ENCODE measurements at regions of chr21 and their contacts with region 1.

Region 1: DNA sequence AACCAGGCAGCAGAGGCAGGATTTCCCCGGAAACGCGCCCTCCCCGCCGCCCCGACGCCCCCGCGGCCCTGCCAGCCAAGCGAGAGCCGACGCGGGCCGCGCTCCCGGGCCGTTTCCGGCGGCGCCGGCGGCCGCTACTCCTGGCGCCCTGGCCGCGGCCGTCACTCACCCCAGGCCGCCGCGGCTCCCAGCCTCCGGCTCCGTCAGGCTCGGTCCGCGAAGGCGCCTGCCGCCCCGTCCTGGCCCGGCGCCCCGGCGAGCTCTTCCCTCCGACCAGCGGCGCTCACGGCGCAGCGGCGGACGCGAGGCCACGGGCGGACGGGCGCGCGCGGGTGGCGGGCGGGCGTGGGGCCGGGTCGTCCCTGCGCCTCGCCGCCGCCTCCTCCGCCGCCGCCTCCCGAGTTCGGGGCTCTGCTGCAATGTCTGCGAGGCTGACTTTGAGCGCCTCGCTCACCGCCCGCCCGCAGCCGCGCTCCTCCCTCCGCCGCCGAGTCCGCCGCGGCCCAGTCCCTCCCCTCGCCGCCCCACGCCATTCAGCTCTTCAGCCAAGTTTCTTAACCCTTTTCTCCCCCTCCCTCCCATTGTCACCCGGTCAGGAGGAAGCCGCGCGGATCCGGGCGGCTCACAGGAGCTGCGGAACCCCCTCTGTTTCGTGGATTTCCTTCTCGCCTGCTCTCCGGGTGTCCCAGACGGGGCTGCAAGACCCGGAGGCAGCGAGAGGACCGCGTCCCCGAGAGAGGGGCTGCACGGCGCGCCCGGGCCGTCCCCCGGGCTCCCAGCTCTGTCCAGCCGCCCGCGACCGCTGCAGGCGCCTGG is at the start of gene NRIP1:
- DNase-seq: peak; percentile 80 to 88 (median 82)
- ATAC-seq: peak; percentile 91
- H3K4me3 ChIP-seq: peak within 1 kb of the TSS; percentile 73
- H3K4me3 Mint-ChIP-seq: peak within 1 kb of the TSS; percentile 94 to 99 (median 96)
- H3K27ac ChIP-seq: peak within 1 kb of the TSS; percentile 85
- H3K27ac Mint-ChIP-seq: peak within 1 kb of the TSS; percentile 95 to 99 (median 98)
- H3K4me1 ChIP-seq: peaks cover 0 to 20% of the 10 kb centered on the region in 2 donors
- H3K4me1 Mint-ChIP-seq: peaks cover 25 to 53% (median 45%) of the 10 kb centered on the region in 7 donors
- H3K27me3 ChIP-seq: no peaks in the 10 kb centered on the region
- H3K27me3 Mint-ChIP-seq: peaks cover 0 to 33% (median 0%) of the 10 kb centered on the region in 5 donors
- total RNA-seq, gene NRIP1: 13.8 to 42.6 (median 35.8) TPM

Region 2: DNA sequence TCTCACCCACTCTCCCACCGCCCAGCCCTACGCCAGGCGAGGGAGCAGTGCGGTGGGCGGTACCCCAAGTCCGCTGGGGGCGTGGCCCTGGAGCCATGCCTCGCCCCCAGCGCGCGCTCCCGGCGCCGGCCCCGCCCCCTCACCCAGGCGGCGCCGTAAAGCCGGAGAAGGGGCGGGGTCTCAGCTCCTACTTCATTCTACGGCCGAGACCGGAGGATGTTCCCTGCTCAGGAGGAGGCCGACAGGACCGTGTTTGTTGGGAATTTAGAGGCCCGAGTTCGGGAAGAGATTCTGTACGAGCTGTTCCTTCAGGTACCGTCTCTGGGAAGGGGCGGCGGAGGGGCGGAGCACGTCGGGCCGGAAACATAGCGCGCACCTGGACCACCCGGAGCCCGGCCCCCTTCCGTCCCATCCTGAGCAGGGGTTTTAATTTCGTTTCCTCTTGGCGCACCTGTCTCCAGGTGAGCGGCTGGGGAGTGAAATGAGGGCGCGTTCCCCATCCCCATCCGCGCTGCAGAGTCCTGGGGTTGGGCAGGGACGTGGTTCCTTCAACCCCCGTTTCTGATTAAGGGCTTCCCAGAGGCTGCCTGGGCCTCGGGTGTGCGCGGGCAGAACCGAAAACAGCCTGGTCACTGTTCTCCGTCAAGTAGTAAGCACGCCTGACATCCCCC is 848.7 kb before region 1 on chr21 and contains the start of gene RBM11:
- CTCF ChIA-PET with region 1: no interaction called
- POLR2A ChIA-PET with region 1: no interaction called
- intact Hi-C with region 1: loop called in 1 of 2 experiments (anchors 5 kb)
- DNase-seq: peak; percentile 69 to 88 (median 82)
- ATAC-seq: peak; percentile 99
- H3K4me3 ChIP-seq: peak within 1 kb of the TSS; percentile 80
- H3K4me3 Mint-ChIP-seq: peak within 1 kb of the TSS; percentile 86 to 93 (median 90)
- H3K27ac ChIP-seq: peak within 1 kb of the TSS; percentile 77
- H3K27ac Mint-ChIP-seq: peak within 1 kb of the TSS in 8 of 9 donors; percentile 61 to 88 (median 82)
- H3K4me1 ChIP-seq: peaks cover 0 to 8% of the 10 kb centered on the region in 2 donors
- H3K4me1 Mint-ChIP-seq: peaks cover 0 to 10% (median 8%) of the 10 kb centered on the region in 7 donors
- H3K27me3 ChIP-seq: no peaks in the 10 kb centered on the region
- H3K27me3 Mint-ChIP-seq: peaks cover 4 to 26% (median 8%) of the 10 kb centered on the region in 5 donors
- total RNA-seq, gene RBM11: 0.46 to 19.3 (median 4.9) TPM

Region 3: DNA sequence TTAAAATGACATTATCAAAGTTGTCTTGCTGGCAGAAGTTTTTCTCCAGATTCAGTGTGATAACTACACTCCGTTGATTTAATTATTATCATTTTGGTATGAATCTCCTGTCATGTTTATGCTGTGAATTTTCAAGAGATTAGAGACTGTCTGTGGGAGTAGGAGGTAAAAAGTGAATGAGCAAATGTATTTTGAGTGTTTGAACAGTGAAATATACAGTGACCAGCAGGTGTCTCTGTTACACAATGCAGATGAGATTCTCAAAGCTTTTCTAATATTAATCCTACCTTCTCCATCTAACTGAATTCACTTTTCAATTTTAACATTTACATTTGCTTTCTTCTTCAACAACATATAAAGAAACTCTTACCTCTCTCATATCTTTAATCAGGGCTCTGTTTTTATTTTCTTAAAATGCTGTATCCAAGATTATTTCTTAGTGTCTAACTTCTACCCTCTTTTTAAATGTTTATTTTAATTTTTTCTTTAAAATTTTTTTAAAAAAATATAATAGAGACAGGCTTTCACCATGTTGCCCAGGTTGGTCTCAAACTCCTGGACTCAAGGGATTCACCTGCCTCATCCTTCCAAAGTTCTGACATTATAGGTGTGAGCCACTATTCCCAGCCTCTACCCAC is 661.0 kb before region 1 on chr21:
- CTCF ChIA-PET with region 1: no interaction called
- POLR2A ChIA-PET with region 1: no interaction called
- intact Hi-C with region 1: loop called (anchors 5 kb)
- DNase-seq: peak in 5 of 9 donors; percentile 19 to 55 (median 39)
- ATAC-seq: peak; percentile 79
- H3K4me3 ChIP-seq: no peak overlapping the region
- H3K4me3 Mint-ChIP-seq: no peak overlapping the region
- H3K27ac ChIP-seq: no peak overlapping the region
- H3K27ac Mint-ChIP-seq: no peak overlapping the region
- H3K4me1 ChIP-seq: no peaks in the 10 kb centered on the region
- H3K4me1 Mint-ChIP-seq: no peaks in the 10 kb centered on the region
- H3K27me3 ChIP-seq: no peaks in the 10 kb centered on the region
- H3K27me3 Mint-ChIP-seq: peaks cover 0 to 1% (median 0%) of the 10 kb centered on the region in 5 donors

Region 4: GRCh38 chr21:14737922-14738321 is 326.9 kb before region 1 on chr21:
- CTCF ChIA-PET with region 1: no interaction called
- POLR2A ChIA-PET with region 1: no interaction called
- intact Hi-C with region 1: loop called in 1 of 2 experiments (anchors 10 kb)
- DNase-seq: peak in 7 of 9 donors; percentile 54 to 80 (median 72)
- ATAC-seq: peak; percentile 94
- H3K4me3 ChIP-seq: no peak overlapping the region
- H3K4me3 Mint-ChIP-seq: peak overlapping the region in 1 of 10 donors; percentile 23
- H3K27ac ChIP-seq: no peak overlapping the region
- H3K27ac Mint-ChIP-seq: peak overlapping the region in 1 of 9 donors; percentile 7
- H3K4me1 ChIP-seq: peaks cover 0 to 6% of the 10 kb centered on the region in 2 donors
- H3K4me1 Mint-ChIP-seq: peaks cover 0 to 43% (median 8%) of the 10 kb centered on the region in 7 donors
- H3K27me3 ChIP-seq: no peaks in the 10 kb centered on the region
- H3K27me3 Mint-ChIP-seq: peaks cover 0 to 5% (median 3%) of the 10 kb centered on the region in 5 donors

Region 5: GRCh38 chr21:14956807-14957206 is 108.0 kb before region 1 on chr21:
- CTCF ChIA-PET with region 1: no interaction called
- POLR2A ChIA-PET with region 1: no interaction called
- intact Hi-C with region 1: no loop called
- DNase-seq: no peak
- ATAC-seq: no peak
- H3K4me3 ChIP-seq: no peak overlapping the region
- H3K4me3 Mint-ChIP-seq: no peak overlapping the region
- H3K27ac ChIP-seq: no peak overlapping the region
- H3K27ac Mint-ChIP-seq: no peak overlapping the region
- H3K4me1 ChIP-seq: no peaks in the 10 kb centered on the region
- H3K4me1 Mint-ChIP-seq: no peaks in the 10 kb centered on the region
- H3K27me3 ChIP-seq: no peaks in the 10 kb centered on the region
- H3K27me3 Mint-ChIP-seq: peaks cover 0 to 2% (median 0%) of the 10 kb centered on the region in 5 donors

Region 6: GRCh38 chr21:15005391-15005790 is 59.4 kb before region 1 on chr21:
- CTCF ChIA-PET with region 1: no interaction called
- POLR2A ChIA-PET with region 1: interaction called, 30 read pairs
- intact Hi-C with region 1: loop called (anchors 1 to 2 kb)
- DNase-seq: peak in 8 of 9 donors; percentile 12 to 62 (median 53)
- ATAC-seq: peak; percentile 81
- H3K4me3 ChIP-seq: peak overlapping the region; percentile 56
- H3K4me3 Mint-ChIP-seq: peak overlapping the region; percentile 64 to 88 (median 80)
- H3K27ac ChIP-seq: peak overlapping the region; percentile 24
- H3K27ac Mint-ChIP-seq: peak overlapping the region; percentile 66 to 93 (median 80)
- H3K4me1 ChIP-seq: peaks cover 0 to 28% of the 10 kb centered on the region in 2 donors
- H3K4me1 Mint-ChIP-seq: peaks cover 36 to 67% (median 60%) of the 10 kb centered on the region in 7 donors
- H3K27me3 ChIP-seq: no peaks in the 10 kb centered on the region
- H3K27me3 Mint-ChIP-seq: no peaks in the 10 kb centered on the region

Region 7: GRCh38 chr21:15183813-15184257 is 119.1 kb after region 1 on chr21:
- CTCF ChIA-PET with region 1: no interaction called
- POLR2A ChIA-PET with region 1: no interaction called
- intact Hi-C with region 1: no loop called
- DNase-seq: no peak
- ATAC-seq: no peak
- H3K4me3 ChIP-seq: no peak overlapping the region
- H3K4me3 Mint-ChIP-seq: no peak overlapping the region
- H3K27ac ChIP-seq: no peak overlapping the region
- H3K27ac Mint-ChIP-seq: no peak overlapping the region
- H3K4me1 ChIP-seq: no peaks in the 10 kb centered on the region
- H3K4me1 Mint-ChIP-seq: no peaks in the 10 kb centered on the region
- H3K27me3 ChIP-seq: no peaks in the 10 kb centered on the region
- H3K27me3 Mint-ChIP-seq: peaks cover 0 to 7% (median 3%) of the 10 kb centered on the region in 5 donors

Region 8: DNA sequence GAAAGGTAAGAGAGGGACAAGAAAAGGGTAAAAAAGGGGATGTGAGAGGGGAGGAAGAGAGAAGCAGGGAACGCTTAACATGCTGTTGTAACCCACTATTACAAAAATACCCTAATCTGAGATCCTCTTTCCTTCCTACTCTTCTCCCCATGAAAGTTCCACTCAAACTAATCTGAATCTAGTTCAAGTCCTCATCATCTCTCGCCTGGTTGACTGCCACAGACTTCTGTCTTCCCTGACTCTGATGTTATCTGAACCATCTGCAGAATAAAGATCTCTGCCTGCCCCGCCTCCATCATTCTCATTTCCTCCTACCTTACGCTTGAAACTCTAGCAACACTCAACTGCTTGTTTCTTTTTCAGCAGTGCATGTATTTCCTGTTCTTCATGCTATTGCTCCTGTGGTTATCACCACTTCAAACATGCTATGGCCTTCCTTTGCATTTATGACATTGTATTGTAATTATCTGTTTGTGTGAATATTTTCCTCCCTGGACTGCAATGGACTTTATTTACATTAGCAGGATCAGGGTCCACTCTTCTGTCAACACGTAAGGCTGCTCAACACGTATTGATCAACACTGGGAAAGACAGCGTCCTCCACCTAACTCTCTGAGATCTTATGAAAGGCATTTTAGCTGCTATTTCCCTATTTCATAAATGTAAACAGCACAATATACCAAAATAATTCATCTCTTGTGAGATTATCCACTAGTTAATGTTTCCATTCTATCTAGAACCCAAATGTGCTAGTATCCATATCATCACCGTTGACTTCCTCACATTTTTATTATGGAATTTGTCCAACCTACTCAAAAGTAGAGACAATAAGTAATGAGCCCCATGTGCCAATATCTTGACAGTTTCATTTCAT is 449.5 kb after region 1 on chr21:
- CTCF ChIA-PET with region 1: no interaction called
- POLR2A ChIA-PET with region 1: interaction called, 6 read pairs
- intact Hi-C with region 1: loop called (anchors 1 to 10 kb)
- DNase-seq: peak in 8 of 9 donors; percentile 34 to 87 (median 82)
- ATAC-seq: peak; percentile 99
- H3K4me3 ChIP-seq: peak overlapping the region; percentile 23
- H3K4me3 Mint-ChIP-seq: peak overlapping the region; percentile 59 to 76 (median 69)
- H3K27ac ChIP-seq: peak overlapping the region; percentile 46
- H3K27ac Mint-ChIP-seq: peak overlapping the region; percentile 75 to 94 (median 87)
- H3K4me1 ChIP-seq: peaks cover 12 to 32% of the 10 kb centered on the region in 2 donors
- H3K4me1 Mint-ChIP-seq: peaks cover 16 to 54% (median 31%) of the 10 kb centered on the region in 7 donors
- H3K27me3 ChIP-seq: no peaks in the 10 kb centered on the region
- H3K27me3 Mint-ChIP-seq: no peaks in the 10 kb centered on the region

Region 9: GRCh38 chr21:15729674-15730483 is 665.1 kb after region 1 on chr21 and contains the start of gene USP25:
- CTCF ChIA-PET with region 1: no interaction called
- POLR2A ChIA-PET with region 1: interaction called, 5 read pairs
- intact Hi-C with region 1: loop called (anchors 1 to 2 kb)
- DNase-seq: peak; percentile 76 to 85 (median 82)
- ATAC-seq: peak; percentile 93
- H3K4me3 ChIP-seq: peak within 1 kb of the TSS; percentile 58
- H3K4me3 Mint-ChIP-seq: peak within 1 kb of the TSS; percentile 92 to 98 (median 97)
- H3K27ac ChIP-seq: peak within 1 kb of the TSS; percentile 83
- H3K27ac Mint-ChIP-seq: peak within 1 kb of the TSS; percentile 85 to 97 (median 94)
- H3K4me1 ChIP-seq: peaks cover 19 to 27% of the 10 kb centered on the region in 2 donors
- H3K4me1 Mint-ChIP-seq: peaks cover 9 to 45% (median 33%) of the 10 kb centered on the region in 7 donors
- H3K27me3 ChIP-seq: no peaks in the 10 kb centered on the region
- H3K27me3 Mint-ChIP-seq: peaks cover 0 to 33% (median 0%) of the 10 kb centered on the region in 5 donors
- total RNA-seq, gene USP25: 51.0 to 67.4 (median 56.5) TPM